HCT116 (cell line): ENCODE measurements at regions of chr11 and their contacts with region 1.

Region 1: GRCh38 chr11:19766206-19766605 is 53.6 kb downstream of the NAV2 start:
- DNase-seq: no peak
- ATAC-seq: no peak
- H3K4me3 ChIP-seq: no peak overlapping the region
- H3K27ac ChIP-seq: no peak overlapping the region
- H3K4me1 ChIP-seq: peaks cover 0 to 3% of the 10 kb centered on the region in 2 experiments; a peak in 1 of 4 replicates
- H3K27me3 ChIP-seq: peaks cover 58% of the 10 kb centered on the region
- CTCF ChIP-seq: no peak
- POLR2A ChIP-seq: no peak
- RAD21 ChIP-seq: no peak

Region 2: DNA sequence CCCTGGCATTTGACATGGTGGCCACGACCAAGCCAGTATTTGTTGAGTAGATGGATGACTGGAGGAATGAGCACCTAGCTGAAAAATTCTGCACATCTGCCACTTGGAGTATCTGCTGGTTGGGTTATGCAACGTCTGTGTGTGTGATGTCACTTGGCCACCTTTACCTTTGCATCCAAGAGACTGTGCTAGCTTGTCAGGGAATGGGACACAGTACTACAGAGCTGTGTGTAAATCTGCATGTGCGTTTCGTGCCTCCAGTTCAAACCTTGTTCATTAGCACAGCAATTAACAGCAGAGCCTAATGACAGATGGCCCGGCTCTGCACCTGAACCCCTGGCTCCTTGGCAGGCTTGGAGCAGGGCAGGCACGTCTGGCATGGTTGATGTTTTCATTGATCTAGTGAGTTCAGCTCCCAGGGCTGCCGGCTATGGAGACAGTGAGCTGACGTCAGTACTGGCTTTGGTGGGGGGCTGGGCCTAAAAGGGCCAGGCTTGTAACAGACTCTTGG is 242.0 kb before region 1 on chr11:
- CTCF ChIA-PET with region 1: no interaction called
- POLR2A ChIA-PET with region 1: no interaction called
- RAD21 ChIA-PET with region 1: no interaction called
- intact Hi-C with region 1: no loop called
- DNase-seq: no peak
- ATAC-seq: no peak
- H3K4me3 ChIP-seq: no peak overlapping the region
- H3K27ac ChIP-seq: no peak overlapping the region
- H3K4me1 ChIP-seq: no peaks in the 10 kb centered on the region
- H3K27me3 ChIP-seq: peaks cover 22% of the 10 kb centered on the region
- CTCF ChIP-seq: no peak
- POLR2A ChIP-seq: no peak
- RAD21 ChIP-seq: no peak

Region 3: DNA sequence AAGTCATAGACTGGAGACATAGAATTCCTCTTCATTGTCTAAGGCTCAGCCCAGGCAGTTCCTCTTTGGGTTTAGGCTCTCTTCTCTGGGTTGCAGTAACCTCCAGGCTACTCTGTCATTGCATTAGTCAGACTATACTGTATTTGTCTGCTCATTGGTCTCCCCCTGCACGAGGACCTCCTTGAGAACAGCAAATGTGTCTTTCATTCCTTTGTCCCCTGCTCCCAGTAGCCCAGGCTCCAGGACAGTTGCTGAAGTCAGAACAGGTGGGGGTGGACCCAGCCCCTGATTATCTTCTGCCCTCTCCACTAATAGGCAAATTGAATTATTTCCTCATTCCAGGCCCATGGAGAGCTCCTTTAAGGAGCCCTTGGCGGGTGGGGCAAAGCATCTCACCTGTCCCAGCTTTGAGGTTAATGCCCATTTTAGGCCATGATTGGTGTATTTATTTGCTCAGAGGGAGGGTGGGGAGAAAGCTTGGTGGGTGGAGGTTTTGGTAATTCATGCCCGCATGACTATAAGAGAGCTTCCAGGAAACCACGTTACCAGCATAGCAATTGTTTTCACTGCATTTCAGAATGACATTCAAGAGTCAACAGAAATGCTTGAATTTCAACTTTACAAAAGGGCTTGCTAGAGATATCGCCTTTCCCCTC is 12.6 kb before region 1 on chr11:
- CTCF ChIA-PET with region 1: no interaction called
- POLR2A ChIA-PET with region 1: no interaction called
- RAD21 ChIA-PET with region 1: no interaction called
- intact Hi-C with region 1: loop called (anchors 2 kb)
- DNase-seq: no peak
- ATAC-seq: no peak
- H3K4me3 ChIP-seq: no peak overlapping the region
- H3K27ac ChIP-seq: no peak overlapping the region
- H3K4me1 ChIP-seq: no peaks in the 10 kb centered on the region
- H3K27me3 ChIP-seq: peaks cover 8% of the 10 kb centered on the region; the same call in 1 of the 2 replicates
- CTCF ChIP-seq: no peak
- POLR2A ChIP-seq: no peak
- RAD21 ChIP-seq: no peak